ENCODE measurements at regions of chr12 and their contacts with region 1.

Region 1: DNA sequence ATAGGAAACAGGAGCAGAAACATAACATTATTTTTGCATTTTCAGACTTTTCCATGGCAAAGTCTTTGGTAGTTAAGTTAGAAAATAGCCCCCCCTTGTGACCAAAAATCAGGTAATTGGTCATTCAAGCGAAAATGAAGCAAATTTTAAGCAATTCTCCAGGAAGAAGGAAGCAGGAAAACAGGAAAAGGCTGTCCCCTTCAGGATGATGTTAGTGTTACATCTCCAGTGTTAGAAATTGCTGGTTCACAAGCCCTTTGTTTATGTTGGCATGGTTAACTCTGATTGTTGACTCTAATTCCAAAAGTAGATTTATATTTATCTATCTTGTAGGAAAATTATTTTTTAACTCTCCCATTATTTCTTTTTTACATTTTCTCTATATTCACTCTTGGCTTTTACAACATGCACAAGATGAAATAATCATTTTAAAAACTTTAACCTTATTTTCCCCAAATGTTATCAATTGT is 18.8 kb upstream of the GAS2L3 start:
- DNase-seq: peak; percentile 53 to 79 (median 68)
- ATAC-seq: peak; percentile 95
- H3K4me3 ChIP-seq: no peak overlapping the region
- H3K27ac ChIP-seq: no peak overlapping the region
- H3K4me1 ChIP-seq: no peaks in the 10 kb centered on the region
- H3K27me3 ChIP-seq: no peaks in the 10 kb centered on the region
- CTCF ChIP-seq: peak; percentile 89 to 99 (median 91)
- EP300 ChIP-seq: no peak
- POLR2A ChIP-seq: no peak
- RAD21 ChIP-seq: peak; percentile 94 to 96

Region 2: DNA sequence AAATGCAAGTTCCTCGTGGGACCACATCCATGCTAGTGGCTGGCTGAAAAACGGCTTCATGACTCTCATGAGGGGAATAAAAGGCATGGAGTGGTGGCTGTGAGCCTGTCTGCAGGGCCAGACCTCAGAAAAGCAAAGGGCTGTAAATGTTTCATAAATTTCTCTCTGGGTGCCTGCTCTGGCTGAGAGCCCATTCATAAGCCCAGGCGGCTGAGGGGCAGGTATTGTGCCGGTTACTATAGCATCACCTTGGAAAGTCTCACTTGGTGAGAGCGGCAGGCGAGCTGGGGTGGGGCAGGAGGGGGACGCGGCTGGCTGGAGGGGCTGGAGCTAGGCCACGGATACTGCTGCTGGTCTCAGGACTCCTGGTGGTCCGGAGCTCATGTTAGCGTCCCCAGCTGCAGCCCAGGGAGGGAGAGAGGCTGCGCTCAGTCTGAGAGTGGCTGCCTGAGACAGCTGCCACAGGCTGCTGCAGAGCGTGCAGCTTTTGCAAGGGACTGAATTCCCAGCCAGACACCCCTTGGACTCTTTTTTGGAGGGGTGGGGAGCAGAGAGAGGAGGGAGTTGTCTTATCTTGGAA is 197.9 kb before region 1 on chr12 and contains the start of gene SLC17A8:
- CTCF ChIA-PET with region 1: interaction called, 3 read pairs
- POLR2A ChIA-PET with region 1: no interaction called
- in situ Hi-C with region 1: loop called (anchors 10 kb)
- intact Hi-C with region 1: no loop called
- DNase-seq: no peak
- ATAC-seq: peak; percentile 73
- H3K4me3 ChIP-seq: no peak within 1 kb of the TSS
- H3K27ac ChIP-seq: no peak within 1 kb of the TSS
- H3K4me1 ChIP-seq: no peaks in the 10 kb centered on the region
- H3K27me3 ChIP-seq: peaks cover 0 to 19% of the 10 kb centered on the region in 2 experiments; a peak in 3 of 5 replicates
- CTCF ChIP-seq: no peak
- EP300 ChIP-seq: no peak
- POLR2A ChIP-seq: no peak
- RAD21 ChIP-seq: no peak
- polyA plus RNA-seq, gene SLC17A8: not detected

Region 3: GRCh38 chr12:100391856-100392255 is 162.8 kb before region 1 on chr12:
- CTCF ChIA-PET with region 1: interaction called, 18 read pairs
- POLR2A ChIA-PET with region 1: no interaction called
- in situ Hi-C with region 1: no loop called
- intact Hi-C with region 1: loop called (anchors 1 kb)
- DNase-seq: peak in 1 of 4 experiments; percentile 10
- ATAC-seq: peak; percentile 41; the same call in 1 of the 3 replicates
- H3K4me3 ChIP-seq: no peak overlapping the region
- H3K27ac ChIP-seq: no peak overlapping the region
- H3K4me1 ChIP-seq: no peaks in the 10 kb centered on the region
- H3K27me3 ChIP-seq: no peaks in the 10 kb centered on the region
- CTCF ChIP-seq: peak in 2 of 3 experiments; percentile 13 to 50; a peak in 3 of 6 replicates
- EP300 ChIP-seq: no peak
- POLR2A ChIP-seq: no peak
- RAD21 ChIP-seq: peak; percentile 34 to 37; a peak in 3 of 4 replicates

Region 4: DNA sequence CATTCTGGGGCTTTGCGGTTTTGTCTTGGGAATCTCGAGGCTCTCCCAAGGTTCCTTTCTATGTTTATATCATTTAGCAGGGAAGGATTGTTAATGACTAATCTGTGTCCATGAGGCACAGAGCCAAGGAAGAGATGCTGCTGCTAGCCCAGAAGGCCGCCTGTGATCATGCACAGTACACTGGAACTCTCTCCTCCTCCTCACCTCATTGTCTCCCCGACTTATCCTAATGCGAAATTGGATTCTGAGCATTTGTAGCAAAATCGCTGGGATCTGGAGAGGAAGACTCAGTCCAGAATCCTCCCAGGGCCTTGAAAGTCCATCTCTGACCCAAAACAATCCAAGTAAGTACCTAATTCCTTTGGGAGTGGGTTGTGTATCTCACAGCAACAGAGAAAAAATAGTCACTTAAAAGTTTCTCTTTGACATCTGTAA is 80.9 kb before region 1 on chr12 and contains the start of gene NR1H4:
- CTCF ChIA-PET with region 1: no interaction called
- POLR2A ChIA-PET with region 1: no interaction called
- in situ Hi-C with region 1: no loop called
- intact Hi-C with region 1: no loop called
- DNase-seq: no peak
- ATAC-seq: no peak
- H3K4me3 ChIP-seq: no peak within 1 kb of the TSS
- H3K27ac ChIP-seq: no peak within 1 kb of the TSS
- H3K4me1 ChIP-seq: no peaks in the 10 kb centered on the region
- H3K27me3 ChIP-seq: no peaks in the 10 kb centered on the region; a peak in 1 of 5 replicates
- CTCF ChIP-seq: no peak
- EP300 ChIP-seq: no peak
- POLR2A ChIP-seq: no peak
- RAD21 ChIP-seq: no peak
- polyA plus RNA-seq, gene NR1H4: 0.03 TPM in 1 of 2 experiments, not detected in the other